Dorsolateral prefrontal cortex (tissue), 120 donors: ENCODE measurements at regions of chr19 and their contacts with region 1.

Region 1: DNA sequence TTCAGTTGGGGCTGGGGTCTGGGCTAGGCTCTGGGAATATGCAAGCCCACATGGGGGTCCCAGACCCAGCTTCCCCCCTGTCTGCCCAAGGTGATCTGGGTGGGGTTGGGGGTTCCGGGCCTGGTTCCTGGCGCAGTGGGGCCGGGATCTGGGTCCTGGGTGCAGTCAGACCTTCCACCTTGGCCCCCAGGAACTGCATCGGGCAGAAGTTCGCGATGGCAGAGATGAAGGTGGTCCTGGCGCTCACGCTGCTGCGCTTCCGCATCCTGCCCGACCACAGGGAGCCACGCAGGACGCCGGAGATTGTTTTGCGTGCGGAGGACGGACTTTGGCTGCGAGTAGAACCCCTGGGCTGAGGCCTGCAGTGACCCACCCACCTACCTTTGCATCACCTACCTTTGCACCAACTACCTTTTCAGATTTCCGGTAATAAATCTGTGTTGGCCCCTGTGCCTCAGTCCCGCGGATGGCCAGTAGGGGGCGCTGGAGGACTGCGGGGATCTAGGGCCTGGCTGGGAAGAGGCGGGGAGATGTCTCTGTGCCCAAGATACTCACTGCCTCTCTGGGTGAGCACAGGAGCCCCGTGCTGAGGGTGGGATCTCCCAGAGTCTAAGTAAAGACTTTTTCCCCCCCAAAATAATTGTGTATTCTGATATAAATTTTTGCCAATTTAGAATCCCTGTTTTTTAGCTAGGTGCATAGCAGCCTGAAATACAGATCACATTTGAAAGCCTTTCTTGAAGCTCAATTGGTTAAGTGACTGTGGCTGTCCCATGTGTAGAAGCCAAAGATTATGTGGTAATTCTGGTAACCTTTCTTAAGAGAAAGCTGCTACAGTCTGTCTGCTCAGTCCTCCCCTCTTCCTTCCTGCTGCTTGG is 11.5 kb upstream of the CYP4F3 start:
- DNase-seq: peak; percentile 57 to 80 (median 70)
- H3K4me3 ChIP-seq: peak overlapping the region in 8 of 59 donors; percentile 4 to 48 (median 34)
- H3K27ac ChIP-seq: no peak overlapping the region
- H3K27me3 ChIP-seq: peaks cover 0 to 32% (median 7%) of the 10 kb centered on the region in 45 donors
- CTCF ChIP-seq: peak; percentile 61 to 96 (median 91)

Region 2: GRCh38 chr19:15365264-15365663 is 264.0 kb before region 1 on chr19:
- intact Hi-C with region 1: no loop called
- DNase-seq: no peak
- H3K4me3 ChIP-seq: no peak overlapping the region
- H3K27ac ChIP-seq: peak overlapping the region in 31 of 59 donors; percentile 2 to 67 (median 38)
- H3K27me3 ChIP-seq: no peaks in the 10 kb centered on the region
- CTCF ChIP-seq: no peak

Region 3: DNA sequence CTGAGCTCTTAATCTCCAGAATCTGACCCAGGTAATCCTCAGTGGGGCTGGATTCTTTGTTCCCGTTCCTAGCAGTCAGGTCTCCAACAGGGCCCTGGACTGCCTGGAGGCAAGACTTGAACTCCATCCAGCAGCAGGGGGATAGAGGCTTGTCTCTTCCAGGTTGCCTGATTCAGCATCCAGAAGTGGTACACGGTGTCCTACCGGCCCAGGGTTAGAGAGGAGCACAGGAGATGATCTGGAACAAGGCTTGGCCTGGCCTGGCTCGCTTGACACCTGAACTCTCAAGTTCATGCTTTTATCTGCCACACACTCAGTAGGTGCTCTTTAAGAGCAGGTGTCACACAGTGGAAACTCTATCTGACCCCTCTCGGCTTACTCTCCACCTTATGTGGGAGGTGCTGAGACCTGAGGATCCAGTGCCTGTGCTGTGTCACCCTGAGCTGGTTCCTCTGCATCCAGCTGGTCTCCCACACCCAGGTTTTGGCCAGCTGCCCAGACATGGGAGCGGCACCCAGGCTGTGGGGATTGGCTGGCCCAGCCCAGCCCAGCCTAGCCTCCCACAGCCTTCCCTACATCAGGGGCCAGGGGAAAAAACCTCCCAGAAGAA is 11.2 kb after region 1 on chr19 and contains the start of gene CYP4F3:
- intact Hi-C with region 1: no loop called
- DNase-seq: peak in 7 of 10 donors; percentile 15 to 78 (median 58)
- H3K4me3 ChIP-seq: no peak within 1 kb of the TSS
- H3K27ac ChIP-seq: peak within 1 kb of the TSS in 44 of 59 donors; percentile 5 to 81 (median 50)
- H3K27me3 ChIP-seq: peaks cover 0 to 8% (median 0%) of the 10 kb centered on the region in 45 donors
- CTCF ChIP-seq: no peak
- total RNA-seq, gene CYP4F3: 0.27 to 13.4 (median 3.4) TPM

Region 4: GRCh38 chr19:15869109-15869555 is 239.9 kb after region 1 on chr19:
- intact Hi-C with region 1: loop called (anchors 2 kb)
- DNase-seq: peak in 5 of 10 donors; percentile 4 to 39 (median 23)
- H3K4me3 ChIP-seq: no peak overlapping the region
- H3K27ac ChIP-seq: no peak overlapping the region
- H3K27me3 ChIP-seq: peaks cover 0 to 33% (median 10%) of the 10 kb centered on the region in 45 donors
- CTCF ChIP-seq: peak in 54 of 56 donors; percentile 19 to 75 (median 56)